Mammary epithelial cell (primary cell): ENCODE measurements at regions of chr16 and their contacts with region 1.

Region 1: GRCh38 chr16:29256501-29256981 is 150.0 kb downstream of the NPIPB11 start:
- DNase-seq: no peak
- H3K4me3 ChIP-seq: no peak overlapping the region
- H3K27ac ChIP-seq: no peak overlapping the region
- H3K4me1 ChIP-seq: peaks cover 12% of the 10 kb centered on the region
- H3K27me3 ChIP-seq: no peaks in the 10 kb centered on the region
- CTCF ChIP-seq: no peak

Region 2: DNA sequence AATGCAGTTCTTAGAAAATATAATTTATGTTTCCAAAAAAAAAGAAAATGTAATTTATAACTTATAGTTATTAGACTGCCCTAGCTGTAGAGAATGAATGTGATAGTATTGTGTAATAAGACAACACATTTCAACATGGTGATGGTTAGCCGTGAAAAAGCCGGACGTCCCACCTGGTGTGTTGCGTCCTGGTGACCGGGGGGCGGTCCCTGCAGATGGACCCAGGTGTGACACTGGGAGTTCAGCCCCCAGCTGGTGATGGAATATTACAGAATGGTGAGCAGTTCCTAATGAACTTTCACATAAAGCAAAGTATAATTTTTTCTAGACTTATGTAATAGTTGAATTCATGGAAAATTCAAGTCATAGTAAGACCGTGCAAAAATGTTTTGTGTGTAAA is 138.9 kb before region 1 on chr16:
- CTCF ChIA-PET with region 1: no interaction called
- dilution Hi-C with region 1: no loop called
- in situ Hi-C with region 1: no loop called
- intact Hi-C with region 1: loop called (anchors 5 kb)
- DNase-seq: no peak
- H3K4me3 ChIP-seq: no peak overlapping the region
- H3K27ac ChIP-seq: no peak overlapping the region
- H3K4me1 ChIP-seq: peaks cover 3% of the 10 kb centered on the region
- H3K27me3 ChIP-seq: no peaks in the 10 kb centered on the region
- CTCF ChIP-seq: no peak

Region 3: DNA sequence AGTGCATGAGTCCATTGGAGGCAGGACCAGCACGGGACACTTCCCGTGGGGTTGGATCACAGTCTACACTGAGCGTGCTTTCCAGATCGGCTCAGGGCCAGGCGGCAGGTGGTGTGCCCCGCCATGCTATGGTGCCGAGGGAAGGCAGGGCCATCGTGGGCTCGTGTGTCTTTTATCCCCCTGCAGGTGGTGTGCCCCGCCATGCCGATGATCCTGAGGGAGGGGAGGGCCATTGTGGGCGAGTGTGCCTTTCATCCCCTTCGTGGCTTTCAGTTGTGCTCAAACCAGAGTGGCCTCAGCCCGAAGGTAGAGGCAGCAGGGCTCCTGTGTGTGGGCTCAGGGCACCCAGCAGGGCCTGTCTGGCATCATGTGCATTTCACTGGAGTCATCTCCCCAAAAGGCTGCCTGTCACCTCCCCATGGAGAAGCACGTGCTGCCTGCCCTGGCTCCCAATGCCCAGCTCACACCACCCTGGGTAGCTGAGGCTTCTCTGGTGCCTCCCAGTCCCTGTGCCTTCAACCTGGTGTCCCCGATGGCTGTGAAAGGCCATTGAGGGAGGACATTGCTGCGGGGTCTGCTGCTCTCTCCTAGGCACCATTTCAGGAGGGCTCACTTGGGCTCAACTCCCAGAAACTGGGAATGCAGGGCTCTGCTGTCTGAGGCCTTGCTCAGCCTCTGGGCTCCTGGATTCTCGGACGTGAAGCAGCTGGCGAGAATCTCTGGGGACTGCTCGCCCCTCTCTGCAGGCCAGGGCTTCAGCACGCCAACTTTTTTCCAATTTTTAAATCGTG is 57.6 kb before region 1 on chr16:
- CTCF ChIA-PET with region 1: no interaction called
- dilution Hi-C with region 1: no loop called
- in situ Hi-C with region 1: no loop called
- intact Hi-C with region 1: no loop called
- DNase-seq: no peak
- H3K4me3 ChIP-seq: no peak overlapping the region
- H3K27ac ChIP-seq: no peak overlapping the region
- H3K4me1 ChIP-seq: no peaks in the 10 kb centered on the region
- H3K27me3 ChIP-seq: no peaks in the 10 kb centered on the region
- CTCF ChIP-seq: no peak

Region 4: GRCh38 chr16:29992344-29992967 is 735.9 kb after region 1 on chr16:
- CTCF ChIA-PET with region 1: no interaction called
- dilution Hi-C with region 1: no loop called
- in situ Hi-C with region 1: no loop called
- intact Hi-C with region 1: no loop called
- DNase-seq: no peak
- H3K4me3 ChIP-seq: no peak overlapping the region
- H3K27ac ChIP-seq: no peak overlapping the region
- H3K4me1 ChIP-seq: peaks cover 23% of the 10 kb centered on the region
- H3K27me3 ChIP-seq: no peaks in the 10 kb centered on the region
- CTCF ChIP-seq: no peak